Cardiac septum (tissue), 1 donor: ENCODE measurements at regions of chr12 and their contacts with region 1.

Region 1: GRCh38 chr12:89542912-89543592 is 17.2 kb upstream of the POC1B start:
- DNase-seq: no peak

Region 2: DNA sequence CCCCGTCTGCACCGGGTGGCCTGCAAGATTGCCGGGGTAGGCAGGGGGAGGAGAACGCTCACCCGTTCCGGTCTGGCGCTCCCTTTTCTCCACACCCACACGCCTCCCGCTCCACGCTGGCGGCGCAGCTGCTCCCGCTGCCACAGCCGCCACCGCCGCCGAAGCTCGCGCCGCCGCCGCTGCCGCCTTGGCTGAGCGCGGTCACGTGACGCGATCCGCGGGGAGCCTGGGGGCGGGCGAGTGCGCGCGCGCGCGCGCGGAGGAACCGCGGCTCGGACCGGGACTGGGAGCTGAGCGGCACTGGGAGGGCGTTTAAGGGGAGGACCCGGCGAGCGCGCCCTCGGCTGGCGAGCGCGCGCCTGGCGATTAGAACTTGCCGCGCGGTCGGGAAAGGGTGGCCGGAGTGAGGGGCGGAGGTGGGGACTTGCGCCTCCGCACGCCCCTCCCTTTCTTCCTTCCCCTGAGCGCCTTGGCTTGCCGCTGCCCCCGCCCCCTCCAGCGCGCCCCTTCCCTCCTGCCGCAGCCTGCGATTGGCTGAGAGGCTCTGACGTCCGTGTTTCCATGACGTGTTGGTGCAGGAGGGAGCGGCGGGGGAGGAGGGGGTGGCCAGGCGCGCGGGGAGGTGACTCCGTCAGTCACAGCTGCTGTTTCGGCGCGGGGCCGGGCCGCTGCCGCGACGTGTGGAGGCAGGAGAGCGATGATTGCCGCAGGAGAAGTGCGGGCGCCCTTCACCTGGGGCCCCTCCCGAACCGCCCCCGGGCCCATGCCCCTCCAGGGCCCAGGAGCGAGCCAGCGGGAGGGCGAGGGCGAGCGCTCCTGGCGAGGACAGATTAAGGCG is 166.3 kb after region 1 on chr12:
- intact Hi-C with region 1: loop called (anchors 5 kb)
- DNase-seq: peak; percentile 99

Region 3: DNA sequence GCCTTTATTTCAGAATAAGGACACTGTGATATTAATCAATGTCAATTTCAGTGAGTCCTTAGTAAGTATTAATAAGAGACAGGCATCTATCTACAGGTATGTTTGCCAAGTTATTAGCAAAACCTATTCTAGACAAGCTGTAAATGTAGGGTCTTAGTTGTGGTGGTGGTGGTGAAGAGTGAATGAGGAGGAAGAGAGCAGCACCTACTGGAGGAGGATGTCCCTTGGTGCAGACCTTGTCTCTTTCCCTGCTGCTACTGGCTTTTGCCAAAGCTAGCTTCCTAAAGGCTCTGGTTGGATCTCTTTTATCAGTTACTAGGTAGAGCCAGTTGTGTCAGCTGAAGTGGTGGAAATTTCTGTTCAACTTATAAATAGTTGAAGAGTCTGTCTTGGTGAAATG is 470.4 kb after region 1 on chr12:
- intact Hi-C with region 1: loop called (anchors 10 kb)
- DNase-seq: no peak

Region 4: DNA sequence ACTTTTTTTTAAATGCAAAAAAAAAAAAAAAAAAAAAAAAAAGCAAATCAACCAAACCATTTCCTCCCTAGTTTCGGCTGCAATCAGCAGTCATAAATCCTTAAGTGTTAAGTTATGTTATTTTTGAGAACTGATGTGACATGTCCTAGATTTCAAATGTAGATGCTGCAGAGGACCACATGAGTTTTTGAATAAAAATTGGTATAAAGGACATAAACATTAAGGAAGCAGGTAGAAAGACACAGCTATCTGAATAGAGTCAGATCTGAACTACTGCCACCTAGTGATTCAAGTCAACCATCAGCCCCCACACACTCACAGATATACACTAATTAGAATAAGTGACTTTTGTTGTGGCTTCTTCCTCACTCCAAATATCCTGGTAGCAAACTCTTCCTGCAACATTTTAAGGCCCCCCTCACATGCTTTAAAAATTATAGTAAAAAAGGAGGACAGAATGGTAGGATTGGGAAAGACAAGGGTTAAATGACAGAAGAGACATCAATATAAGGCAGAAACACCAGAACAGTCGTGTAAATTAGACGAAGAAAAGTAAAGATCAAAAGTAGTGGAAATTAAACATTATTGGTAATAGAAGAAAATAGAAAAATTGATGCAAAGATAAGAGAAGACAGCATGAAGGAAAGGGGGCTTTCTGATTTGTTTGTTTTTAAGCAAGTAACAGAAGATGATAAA is 560.1 kb after region 1 on chr12:
- intact Hi-C with region 1: loop called (anchors 5 kb)
- DNase-seq: no peak